Sigmoid colon (tissue), 7 donors: ENCODE measurements at regions of chr2 and their contacts with region 1.

Region 1: DNA sequence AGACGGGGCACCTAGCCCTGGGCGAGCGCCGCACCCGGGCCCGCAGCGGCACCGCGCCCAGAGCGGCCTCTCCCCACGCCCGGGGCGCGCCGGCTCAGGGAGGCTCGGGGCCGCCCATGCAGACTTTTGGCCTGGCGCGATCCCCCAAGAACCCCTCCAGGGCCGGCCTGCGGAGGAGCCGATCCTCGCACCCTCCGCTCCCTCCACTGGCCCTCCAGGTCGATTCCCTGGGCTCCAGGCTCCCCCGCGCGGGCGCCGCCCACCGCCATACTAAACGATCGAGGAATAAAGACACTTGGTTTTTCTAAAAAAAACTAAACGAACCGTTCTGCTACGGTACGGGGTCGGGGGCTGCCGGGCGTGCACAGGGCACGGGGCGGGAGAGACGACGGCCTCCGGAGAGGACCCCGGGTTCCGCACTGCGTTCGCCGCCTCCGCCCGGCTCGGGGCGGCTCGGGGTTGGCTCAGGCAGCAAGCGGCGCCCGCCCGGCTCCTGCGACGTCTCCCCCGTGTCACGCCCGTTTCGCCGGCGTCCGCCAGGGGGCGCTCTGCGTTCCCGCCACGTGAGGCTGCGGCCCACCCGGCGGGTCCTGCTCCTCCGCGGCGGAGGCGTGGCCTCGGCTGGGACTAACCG is 365 bp upstream of the KHK start:
- DNase-seq: peak; percentile 97
- H3K4me3 ChIP-seq: peak overlapping the region; percentile 32 to 63 (median 55)
- H3K27ac ChIP-seq: peak overlapping the region; percentile 88 to 98 (median 96)
- H3K4me1 ChIP-seq: peaks cover 0 to 62% (median 58%) of the 10 kb centered on the region in 4 donors
- H3K27me3 ChIP-seq: no peaks in the 10 kb centered on the region
- CTCF ChIP-seq: peak; percentile 47 to 88 (median 63)
- EP300 ChIP-seq: no peak
- POLR2A ChIP-seq: no peak

Region 2: DNA sequence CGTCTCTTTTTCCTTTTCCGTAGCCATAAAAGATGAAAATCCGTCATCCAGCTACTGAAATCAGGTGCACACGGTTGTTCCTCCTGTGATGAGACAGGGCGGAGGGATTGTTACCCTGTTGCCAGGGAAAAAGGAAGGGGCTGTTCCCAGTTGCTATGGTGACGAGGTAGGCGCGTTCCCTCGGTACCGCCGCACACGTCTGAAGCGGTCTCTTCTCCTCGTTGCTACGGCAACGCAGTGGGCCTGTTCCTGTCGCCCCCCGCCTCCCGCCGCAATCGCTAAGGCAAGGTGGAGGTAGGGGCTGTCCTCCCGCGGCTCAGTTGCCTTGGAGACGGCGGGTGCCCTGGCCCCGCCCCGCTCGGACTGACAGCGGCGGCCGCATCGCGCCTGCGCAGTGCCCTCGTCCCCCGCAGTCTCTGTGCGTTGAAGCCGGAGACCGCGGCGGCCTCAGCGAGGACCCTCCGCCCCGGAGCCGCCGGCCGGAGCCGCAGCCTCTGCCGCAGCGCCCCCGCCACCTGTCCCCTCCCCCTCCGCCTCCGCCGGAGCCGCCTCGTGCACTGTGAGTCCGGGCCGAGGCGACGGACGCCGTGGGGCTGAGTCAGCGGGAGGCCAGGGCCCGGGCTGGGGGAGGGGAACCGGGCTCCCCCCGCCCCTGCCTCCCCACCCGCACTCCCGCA is 115.8 kb before region 1 on chr2 and contains the start of gene MAPRE3:
- intact Hi-C with region 1: loop called (anchors 2 kb)
- DNase-seq: peak; percentile 88
- H3K4me3 ChIP-seq: peak within 1 kb of the TSS; percentile 62 to 95 (median 82)
- H3K27ac ChIP-seq: peak within 1 kb of the TSS; percentile 76 to 88 (median 86)
- H3K4me1 ChIP-seq: peaks cover 0 to 24% (median 17%) of the 10 kb centered on the region in 4 donors
- H3K27me3 ChIP-seq: no peaks in the 10 kb centered on the region
- CTCF ChIP-seq: no peak
- EP300 ChIP-seq: no peak
- POLR2A ChIP-seq: no peak
- total RNA-seq, gene MAPRE3: 5.1 to 27.4 (median 8.9) TPM

Region 3: DNA sequence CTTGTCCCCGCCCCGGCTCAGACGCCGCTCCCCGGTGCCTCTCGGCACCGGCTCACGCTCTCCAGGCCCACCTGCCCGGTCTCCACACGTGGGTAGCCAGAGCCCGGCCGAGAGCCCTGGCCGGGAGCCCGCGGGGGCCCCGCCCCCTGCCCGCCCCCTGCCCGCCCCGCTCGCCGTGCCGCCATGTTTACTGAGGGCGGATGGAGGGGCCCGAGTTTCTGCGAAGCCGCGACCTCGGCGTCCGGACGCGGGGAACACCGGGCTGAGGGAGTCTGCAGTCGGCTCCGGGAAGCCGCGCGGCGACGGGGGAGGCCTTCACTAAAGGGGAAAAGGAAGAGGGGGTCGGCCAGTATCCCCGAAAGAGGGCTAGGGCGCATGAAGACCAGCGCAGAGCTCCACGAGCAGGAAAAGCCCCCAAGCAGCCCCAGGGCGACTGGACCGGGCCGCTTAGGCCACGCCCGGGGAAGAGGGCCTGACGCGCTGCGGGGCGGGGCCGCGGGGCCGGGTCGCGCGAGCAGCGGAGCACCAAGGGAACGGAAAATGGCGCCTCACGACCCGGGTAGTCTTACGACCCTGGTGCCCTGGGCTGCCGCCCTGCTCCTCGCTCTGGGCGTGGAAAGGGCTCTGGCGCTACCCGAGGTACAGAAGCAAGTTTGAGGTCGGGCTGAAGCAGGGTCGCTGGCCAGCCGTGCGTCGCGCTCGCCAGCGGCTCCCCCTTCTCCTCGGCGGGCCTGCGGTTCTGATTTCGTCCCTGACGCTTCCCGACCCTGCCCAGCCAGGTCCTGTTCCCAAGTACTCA is 125.8 kb after region 1 on chr2 and contains the starts of genes ATRAID and SLC5A6:
- intact Hi-C with region 1: loop called (anchors 5 kb)
- DNase-seq: peak; percentile 94
- H3K4me3 ChIP-seq: peak within 1 kb of the TSS; percentile 60 to 77 (median 74)
- H3K27ac ChIP-seq: peak within 1 kb of the TSS; percentile 92 to 95 (median 94)
- H3K4me1 ChIP-seq: peaks cover 0 to 31% (median 21%) of the 10 kb centered on the region in 4 donors
- H3K27me3 ChIP-seq: no peaks in the 10 kb centered on the region
- CTCF ChIP-seq: no peak
- EP300 ChIP-seq: no peak
- POLR2A ChIP-seq: peak in 1 of 2 donors; percentile 79
- total RNA-seq, gene ATRAID: 128 to 226 (median 159) TPM
- total RNA-seq, gene SLC5A6: 7.2 to 15.5 (median 12.9) TPM